ENCODE measurements at regions of chr10 and their contacts with region 1.

Region 1: DNA sequence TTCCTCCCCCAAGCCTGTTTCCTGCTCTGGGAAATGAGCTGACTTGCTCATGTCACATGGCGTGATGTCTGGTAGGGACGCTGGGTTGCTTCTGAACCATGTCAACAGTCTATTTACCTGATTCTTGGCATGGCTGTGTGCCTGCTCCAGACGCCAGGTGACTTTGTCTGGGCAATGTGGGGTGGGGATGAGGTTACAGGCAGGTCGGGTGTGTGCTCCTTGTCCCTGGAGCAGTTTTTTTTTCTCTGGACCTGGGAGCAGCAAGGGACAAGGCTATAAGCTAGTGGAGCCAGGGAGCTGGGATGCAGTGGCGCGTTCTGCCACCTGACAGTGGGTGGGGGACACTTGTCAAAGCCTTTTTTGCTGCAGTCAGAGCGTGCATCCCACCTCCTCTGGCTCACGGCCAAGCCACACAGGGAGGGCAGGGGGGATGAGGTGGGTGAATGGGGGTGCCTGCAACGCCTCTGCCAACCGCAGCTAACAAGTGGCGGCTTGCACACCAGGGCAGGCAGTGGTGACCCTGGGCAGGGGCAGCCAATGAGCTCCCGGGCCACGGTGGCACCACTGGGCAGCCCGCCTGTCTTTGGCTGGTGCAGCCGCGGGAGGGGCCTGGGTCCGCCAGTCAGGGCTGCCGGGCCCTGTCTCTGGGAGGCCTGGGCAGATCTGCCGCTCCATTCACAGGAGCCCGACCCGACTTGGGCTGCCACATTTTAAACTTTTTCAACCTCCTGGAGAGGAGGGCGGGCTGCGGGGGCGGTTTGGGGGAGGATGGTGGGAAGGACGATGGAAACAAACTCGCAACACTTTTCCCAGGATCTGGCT is 22.9 kb downstream of the DNAJB12 start:
- DNase-seq: peak; percentile 87 to 93
- ATAC-seq: peak; percentile 76

Region 2: DNA sequence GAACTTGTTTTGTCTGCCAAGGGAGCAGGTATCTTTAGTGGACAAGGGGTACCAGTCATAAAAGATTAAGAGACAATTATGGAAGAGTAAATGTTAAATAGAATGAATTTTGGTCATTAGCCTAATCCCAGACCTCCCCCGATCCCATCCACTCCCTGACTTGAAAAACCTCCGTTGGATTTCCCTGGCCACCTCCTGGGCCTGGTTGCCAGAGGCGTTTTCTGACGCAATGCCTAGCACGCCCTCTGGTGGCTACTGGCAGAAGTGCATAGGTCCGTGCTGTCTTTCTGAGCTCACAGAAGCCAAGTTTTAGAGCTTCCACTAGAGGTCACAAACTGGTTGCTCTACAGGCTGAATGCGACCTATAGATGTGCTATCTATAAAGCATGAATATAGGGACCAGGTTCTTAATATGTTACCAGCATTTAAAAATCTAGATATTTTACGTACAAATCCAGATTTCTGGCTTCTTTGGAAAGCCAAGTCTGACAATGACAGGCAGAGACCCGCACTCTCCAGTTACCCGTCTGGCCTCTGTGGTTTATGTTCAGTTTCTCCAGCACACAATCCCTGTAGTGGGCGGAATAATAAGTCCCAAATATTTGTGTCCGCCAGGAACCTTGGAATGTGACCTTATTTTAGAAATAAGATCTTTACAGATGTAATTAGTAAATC is 283.2 kb before region 1 on chr10:
- intact Hi-C with region 1: loop called in 1 of 2 experiments (anchors 10 kb)
- DNase-seq: peak; percentile 79 to 95
- ATAC-seq: peak; percentile 90

Region 3: GRCh38 chr10:72223743-72224101 is 108.1 kb before region 1 on chr10:
- intact Hi-C with region 1: loop called in 1 of 2 experiments (anchors 10 kb)
- DNase-seq: no peak
- ATAC-seq: no peak

Region 4: GRCh38 chr10:72273410-72274212 is 58.2 kb before region 1 on chr10 and contains the start of gene DDIT4:
- intact Hi-C with region 1: loop called in 1 of 2 experiments (anchors 10 kb)
- DNase-seq: peak; percentile 99 to 100
- ATAC-seq: peak; percentile 77
- total RNA-seq, gene DDIT4: 60.1 to 210 TPM

Region 5: DNA sequence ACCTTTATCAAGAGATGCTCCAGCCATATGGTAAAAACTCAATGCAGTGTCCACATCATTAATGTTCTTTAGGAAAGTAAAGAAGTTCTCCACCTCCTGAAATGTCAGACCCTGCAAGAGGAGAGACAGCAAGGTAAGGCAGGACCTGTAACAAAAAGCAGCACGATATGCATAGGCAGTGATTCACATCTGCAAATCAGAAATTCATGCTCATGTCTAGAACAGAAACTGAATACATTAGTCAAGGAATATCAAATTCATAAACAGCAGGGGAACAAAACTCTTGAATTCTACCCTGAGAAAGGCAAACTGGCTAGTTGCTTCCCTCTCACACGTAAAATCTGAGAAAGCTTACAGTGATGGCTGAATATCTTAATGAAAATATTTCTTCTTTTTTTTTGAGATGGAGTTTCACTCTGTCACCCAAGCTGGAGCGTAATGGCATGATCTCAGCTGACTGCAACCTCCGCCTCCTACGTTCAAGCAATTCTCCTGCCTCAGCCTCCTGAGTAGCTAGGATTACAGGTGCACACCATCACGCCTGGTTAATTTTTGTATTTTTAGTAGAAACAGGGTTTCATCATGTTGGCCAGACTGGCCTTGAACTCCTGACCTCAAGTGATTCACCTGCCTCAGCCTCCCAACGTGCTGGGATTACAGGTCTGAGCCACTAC is 76.3 kb after region 1 on chr10:
- intact Hi-C with region 1: no loop called
- DNase-seq: no peak
- ATAC-seq: no peak

Region 6: DNA sequence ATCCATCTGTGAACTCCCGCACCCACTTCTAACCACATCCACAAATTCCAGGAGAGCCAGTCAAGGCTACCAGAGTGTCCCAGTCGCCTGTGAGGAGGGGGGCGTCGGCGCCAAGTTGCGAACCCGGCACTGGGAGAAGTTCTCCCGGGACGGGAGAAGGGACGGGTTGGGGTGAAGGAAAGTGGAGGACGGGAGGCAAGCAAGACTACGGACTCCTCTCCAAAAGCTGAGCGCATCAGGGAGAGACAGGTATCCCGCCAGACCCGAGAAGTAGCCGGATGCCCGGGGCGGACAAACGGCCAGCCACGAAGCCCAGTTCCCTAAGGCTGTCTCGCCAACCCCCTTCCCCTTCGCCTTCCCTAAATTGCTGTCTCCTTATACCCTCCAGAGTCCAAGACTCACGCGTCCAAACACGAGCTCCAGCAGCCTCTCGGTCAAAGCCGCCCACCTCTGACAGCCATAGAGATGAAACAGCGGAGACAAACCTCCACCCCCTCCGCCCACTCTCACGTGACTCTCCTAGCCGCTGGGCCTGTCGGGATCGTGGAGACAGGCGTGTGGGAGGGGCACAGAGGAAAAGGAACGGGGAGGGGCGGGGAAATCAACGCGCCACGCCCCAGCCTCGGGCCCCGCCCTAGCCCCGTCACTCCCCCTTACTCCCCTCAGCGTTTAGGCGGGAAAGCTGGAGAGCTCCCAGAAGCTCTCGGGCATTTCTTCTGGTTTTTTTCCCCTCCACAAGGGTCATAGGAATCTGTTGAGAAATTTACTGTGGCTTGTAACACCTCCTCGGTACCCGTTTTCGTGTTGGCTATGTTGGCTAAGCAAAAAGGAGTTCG is 294.0 kb after region 1 on chr10 and contains the start of gene MICU1:
- intact Hi-C with region 1: no loop called
- DNase-seq: peak; percentile 97
- ATAC-seq: peak; percentile 100
- total RNA-seq, gene MICU1: 48.9 to 54.1 TPM

Region 7: DNA sequence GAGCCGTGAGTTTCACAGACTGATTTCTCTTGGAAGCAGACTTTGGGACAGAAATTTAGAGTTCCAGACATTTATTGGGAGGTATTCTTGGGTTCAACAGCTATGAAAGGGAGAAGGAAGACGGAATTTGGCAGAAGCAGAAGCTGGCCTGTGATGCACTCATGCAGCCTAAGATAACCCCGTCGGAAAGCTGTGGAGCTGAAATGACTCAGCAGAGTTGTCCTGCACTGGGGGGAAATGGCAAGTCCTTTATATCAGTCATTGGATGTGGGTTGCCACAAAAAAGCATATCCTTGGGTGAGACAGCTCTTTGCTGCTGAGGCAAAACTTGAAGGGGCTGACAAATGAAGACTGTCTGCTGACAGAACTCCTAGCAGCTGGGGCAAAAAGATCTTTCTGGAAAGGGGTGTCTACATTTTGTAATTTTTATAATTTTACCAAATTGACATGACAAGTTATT is 305.6 kb after region 1 on chr10:
- intact Hi-C with region 1: no loop called
- DNase-seq: peak in 1 of 2 donors; percentile 41
- ATAC-seq: no peak

Region 8: DNA sequence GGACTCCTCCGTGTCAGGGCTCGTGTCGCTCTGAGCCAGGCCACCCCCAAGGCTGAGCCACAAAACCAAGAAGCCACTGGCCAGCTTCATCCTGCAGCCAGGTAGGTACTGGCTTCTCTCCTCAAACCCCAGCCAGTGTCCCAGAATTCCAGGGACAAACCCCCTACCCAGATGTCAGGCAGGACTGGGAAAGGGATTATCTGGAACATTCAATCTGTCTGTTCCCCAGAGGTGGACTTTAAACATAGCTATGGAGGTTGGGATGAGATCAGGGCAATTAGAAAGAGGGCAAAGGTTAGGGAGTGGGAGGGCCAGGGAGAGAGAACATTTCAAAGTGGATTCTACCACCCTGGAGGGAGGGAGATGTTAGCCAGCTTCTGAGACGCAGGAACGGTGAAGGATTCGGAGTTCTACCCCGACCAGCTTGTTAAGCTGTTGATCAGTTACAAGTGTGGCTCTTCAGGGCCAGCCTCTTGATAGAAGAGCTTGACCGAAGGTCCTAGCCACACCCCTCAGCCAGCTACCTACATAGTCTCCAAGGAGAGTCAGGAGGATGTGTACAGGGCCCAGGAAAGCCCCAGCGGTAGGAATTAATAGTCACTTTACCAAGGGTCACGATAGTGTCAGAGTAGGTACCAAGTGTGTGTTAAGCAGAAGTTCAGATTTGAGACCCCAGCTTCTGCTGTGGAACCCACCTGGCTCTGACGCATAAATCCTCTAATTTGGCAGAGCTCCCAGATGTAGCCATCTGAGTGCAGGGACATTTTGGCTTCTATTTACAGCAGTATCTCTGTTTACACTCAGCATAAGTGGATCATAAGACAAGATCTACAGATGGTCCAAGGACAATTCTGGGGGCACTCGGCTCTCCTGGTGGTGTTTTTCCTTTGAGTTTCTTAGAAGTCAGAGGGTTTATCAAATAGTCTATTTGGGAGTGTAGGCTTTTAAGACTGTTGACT is 623.1 kb after region 1 on chr10 and contains the start of gene PLA2G12B:
- intact Hi-C with region 1: no loop called
- DNase-seq: peak; percentile 59 to 66
- ATAC-seq: peak; percentile 90
- total RNA-seq, gene PLA2G12B: 5.1 to 29.5 TPM

Measured in left colon (tissue), 2 donors.